ENCODE measurements at regions of chr13 and their contacts with region 1.

Region 1: GRCh38 chr13:72781451-72782439 is at the starts of genes DIS3 and PIBF1:
- DNase-seq: peak; percentile 82 to 97 (median 94)
- ATAC-seq: peak; percentile 99
- H3K4me3 ChIP-seq: peak within 1 kb of the TSS; percentile 94
- H3K4me3 Mint-ChIP-seq: peak within 1 kb of the TSS; percentile 96 to 100 (median 99)
- H3K27ac ChIP-seq: peak within 1 kb of the TSS; percentile 87
- H3K27ac Mint-ChIP-seq: peak within 1 kb of the TSS; percentile 95 to 100 (median 98)
- H3K4me1 ChIP-seq: peaks cover 35 to 37% of the 10 kb centered on the region in 2 donors
- H3K4me1 Mint-ChIP-seq: peaks cover 44 to 84% (median 71%) of the 10 kb centered on the region in 7 donors
- H3K27me3 ChIP-seq: no peaks in the 10 kb centered on the region
- H3K27me3 Mint-ChIP-seq: no peaks in the 10 kb centered on the region
- total RNA-seq, gene DIS3: 24.8 to 44.8 (median 39.2) TPM
- total RNA-seq, gene PIBF1: 27.3 to 40.1 (median 31.6) TPM

Region 2: GRCh38 chr13:71517004-71517403 is 1264.7 kb before region 1 on chr13:
- CTCF ChIA-PET with region 1: no interaction called
- POLR2A ChIA-PET with region 1: no interaction called
- intact Hi-C with region 1: no loop called
- DNase-seq: no peak
- ATAC-seq: no peak
- H3K4me3 ChIP-seq: no peak overlapping the region
- H3K4me3 Mint-ChIP-seq: no peak overlapping the region
- H3K27ac ChIP-seq: no peak overlapping the region
- H3K27ac Mint-ChIP-seq: no peak overlapping the region
- H3K4me1 ChIP-seq: no peaks in the 10 kb centered on the region
- H3K4me1 Mint-ChIP-seq: no peaks in the 10 kb centered on the region
- H3K27me3 ChIP-seq: no peaks in the 10 kb centered on the region
- H3K27me3 Mint-ChIP-seq: no peaks in the 10 kb centered on the region

Region 3: GRCh38 chr13:72737033-72737432 is 44.7 kb before region 1 on chr13:
- CTCF ChIA-PET with region 1: no interaction called
- POLR2A ChIA-PET with region 1: no interaction called
- intact Hi-C with region 1: no loop called
- DNase-seq: no peak
- ATAC-seq: no peak
- H3K4me3 ChIP-seq: no peak overlapping the region
- H3K4me3 Mint-ChIP-seq: no peak overlapping the region
- H3K27ac ChIP-seq: no peak overlapping the region
- H3K27ac Mint-ChIP-seq: no peak overlapping the region
- H3K4me1 ChIP-seq: no peaks in the 10 kb centered on the region
- H3K4me1 Mint-ChIP-seq: peaks cover 0 to 32% (median 6%) of the 10 kb centered on the region in 7 donors
- H3K27me3 ChIP-seq: no peaks in the 10 kb centered on the region
- H3K27me3 Mint-ChIP-seq: no peaks in the 10 kb centered on the region

Region 4: GRCh38 chr13:72757792-72758535 is 23.8 kb before region 1 on chr13:
- CTCF ChIA-PET with region 1: no interaction called
- POLR2A ChIA-PET with region 1: no interaction called
- intact Hi-C with region 1: loop called in 1 of 2 experiments (anchors 2 kb)
- DNase-seq: no peak
- ATAC-seq: no peak
- H3K4me3 ChIP-seq: no peak overlapping the region
- H3K4me3 Mint-ChIP-seq: no peak overlapping the region
- H3K27ac ChIP-seq: no peak overlapping the region
- H3K27ac Mint-ChIP-seq: no peak overlapping the region
- H3K4me1 ChIP-seq: no peaks in the 10 kb centered on the region
- H3K4me1 Mint-ChIP-seq: peaks cover 0 to 10% (median 0%) of the 10 kb centered on the region in 7 donors
- H3K27me3 ChIP-seq: no peaks in the 10 kb centered on the region
- H3K27me3 Mint-ChIP-seq: no peaks in the 10 kb centered on the region

Region 5: GRCh38 chr13:72931311-72931710 is 149.6 kb after region 1 on chr13:
- CTCF ChIA-PET with region 1: no interaction called
- POLR2A ChIA-PET with region 1: no interaction called
- intact Hi-C with region 1: no loop called
- DNase-seq: no peak
- ATAC-seq: no peak
- H3K4me3 ChIP-seq: no peak overlapping the region
- H3K4me3 Mint-ChIP-seq: no peak overlapping the region
- H3K27ac ChIP-seq: no peak overlapping the region
- H3K27ac Mint-ChIP-seq: no peak overlapping the region
- H3K4me1 ChIP-seq: no peaks in the 10 kb centered on the region
- H3K4me1 Mint-ChIP-seq: no peaks in the 10 kb centered on the region
- H3K27me3 ChIP-seq: no peaks in the 10 kb centered on the region
- H3K27me3 Mint-ChIP-seq: no peaks in the 10 kb centered on the region

Region 6: DNA sequence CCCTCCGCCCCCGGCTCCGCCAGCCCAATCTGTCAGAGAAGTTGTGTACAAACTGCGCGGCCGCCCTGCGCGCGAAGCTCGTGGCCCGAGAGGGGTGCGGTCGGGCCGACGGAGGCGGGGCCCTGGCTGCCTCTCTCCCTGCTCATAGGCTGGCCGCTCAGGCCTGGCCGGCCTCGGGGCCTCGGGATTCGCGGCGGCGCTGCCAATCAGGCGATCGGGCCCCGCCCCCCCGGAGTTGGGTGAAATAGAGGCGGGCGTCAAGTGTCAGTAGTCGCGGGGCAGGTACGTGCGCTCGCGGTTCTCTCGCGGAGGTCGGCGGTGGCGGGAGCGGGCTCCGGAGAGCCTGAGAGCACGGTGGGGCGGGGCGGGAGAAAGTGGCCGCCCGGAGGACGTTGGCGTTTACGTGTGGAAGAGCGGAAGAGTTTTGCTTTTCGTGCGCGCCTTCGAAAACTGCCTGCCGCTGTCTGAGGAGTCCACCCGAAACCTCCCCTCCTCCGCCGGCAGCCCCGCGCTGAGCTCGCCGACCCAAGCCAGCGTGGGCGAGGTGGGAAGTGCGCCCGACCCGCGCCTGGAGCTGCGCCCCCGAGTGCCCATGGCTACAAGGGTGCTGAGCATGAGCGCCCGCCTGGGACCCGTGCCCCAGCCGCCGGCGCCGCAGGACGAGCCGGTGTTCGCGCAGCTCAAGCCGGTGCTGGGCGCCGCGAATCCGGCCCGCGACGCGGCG is 277.2 kb after region 1 on chr13 and contains the start of gene KLF5:
- CTCF ChIA-PET with region 1: no interaction called
- POLR2A ChIA-PET with region 1: no interaction called
- intact Hi-C with region 1: loop called (anchors 1 to 2 kb)
- DNase-seq: peak; percentile 93 to 98 (median 94)
- ATAC-seq: peak; percentile 98
- H3K4me3 ChIP-seq: peak within 1 kb of the TSS; percentile 58
- H3K4me3 Mint-ChIP-seq: peak within 1 kb of the TSS; percentile 82 to 94 (median 90)
- H3K27ac ChIP-seq: peak within 1 kb of the TSS; percentile 42
- H3K27ac Mint-ChIP-seq: peak within 1 kb of the TSS; percentile 38 to 92 (median 79)
- H3K4me1 ChIP-seq: peaks cover 4 to 10% of the 10 kb centered on the region in 2 donors
- H3K4me1 Mint-ChIP-seq: peaks cover 6 to 32% (median 23%) of the 10 kb centered on the region in 7 donors
- H3K27me3 ChIP-seq: peaks cover 5 to 10% of the 10 kb centered on the region in 2 donors
- H3K27me3 Mint-ChIP-seq: peaks cover 19 to 58% (median 40%) of the 10 kb centered on the region in 5 donors
- total RNA-seq, gene KLF5: 3.6 to 13.3 (median 5.7) TPM

Region 7: GRCh38 chr13:73625562-73626339 is 844.0 kb after region 1 on chr13:
- CTCF ChIA-PET with region 1: no interaction called
- POLR2A ChIA-PET with region 1: no interaction called
- intact Hi-C with region 1: loop called (anchors 5 to 10 kb)
- DNase-seq: peak in 7 of 9 donors; percentile 31 to 80 (median 66)
- ATAC-seq: peak; percentile 90
- H3K4me3 ChIP-seq: no peak overlapping the region
- H3K4me3 Mint-ChIP-seq: peak overlapping the region; percentile 51 to 79 (median 74)
- H3K27ac ChIP-seq: no peak overlapping the region
- H3K27ac Mint-ChIP-seq: peak overlapping the region; percentile 62 to 91 (median 84)
- H3K4me1 ChIP-seq: peaks cover 13 to 32% of the 10 kb centered on the region in 2 donors
- H3K4me1 Mint-ChIP-seq: peaks cover 14 to 63% (median 54%) of the 10 kb centered on the region in 7 donors
- H3K27me3 ChIP-seq: no peaks in the 10 kb centered on the region
- H3K27me3 Mint-ChIP-seq: no peaks in the 10 kb centered on the region

Region 8: DNA sequence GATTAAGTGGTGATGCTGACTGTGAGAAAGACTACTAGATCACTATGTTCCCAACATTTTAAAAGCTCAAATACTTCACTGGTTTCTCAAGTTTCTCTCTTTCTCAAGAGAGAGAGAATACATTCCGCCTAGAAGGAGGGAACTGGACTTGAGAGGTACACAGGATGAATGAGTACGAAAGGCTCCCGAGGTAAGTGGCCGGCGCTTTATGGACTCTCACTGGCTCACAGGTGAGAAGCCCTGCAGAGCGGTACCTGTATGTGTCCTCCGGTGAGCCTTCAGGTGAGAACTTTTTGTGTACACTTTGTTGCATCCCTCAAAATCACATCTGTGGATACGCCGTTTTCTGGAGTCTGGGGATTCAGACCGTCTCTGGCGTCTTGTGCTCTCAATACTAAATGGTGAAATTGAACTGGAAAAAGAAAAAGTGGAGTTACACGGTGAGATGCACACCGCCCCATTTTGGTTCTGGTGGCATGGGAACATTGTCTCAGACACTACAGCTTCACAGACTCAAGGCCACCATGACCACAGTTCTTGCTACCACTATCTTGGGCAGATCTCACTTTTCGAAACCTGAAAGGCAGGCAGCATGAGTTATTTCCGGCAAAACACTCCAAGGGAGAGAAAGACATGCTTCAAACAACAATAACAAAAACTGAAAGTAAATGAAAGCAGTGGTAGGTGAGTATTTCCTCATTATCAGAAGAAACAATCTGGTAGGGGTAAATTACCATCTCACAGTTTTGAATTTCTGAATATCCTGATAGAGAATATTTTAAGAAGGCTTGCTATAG is 933.6 kb after region 1 on chr13:
- CTCF ChIA-PET with region 1: no interaction called
- POLR2A ChIA-PET with region 1: no interaction called
- intact Hi-C with region 1: loop called in 1 of 2 experiments (anchors 1 kb)
- DNase-seq: peak in 8 of 9 donors; percentile 53 to 85 (median 77)
- ATAC-seq: peak; percentile 90
- H3K4me3 ChIP-seq: peak overlapping the region; percentile 7
- H3K4me3 Mint-ChIP-seq: peak overlapping the region; percentile 72 to 86 (median 78)
- H3K27ac ChIP-seq: peak overlapping the region; percentile 67
- H3K27ac Mint-ChIP-seq: peak overlapping the region; percentile 87 to 99 (median 97)
- H3K4me1 ChIP-seq: peaks cover 34 to 43% of the 10 kb centered on the region in 2 donors
- H3K4me1 Mint-ChIP-seq: peaks cover 25 to 80% (median 58%) of the 10 kb centered on the region in 7 donors
- H3K27me3 ChIP-seq: no peaks in the 10 kb centered on the region
- H3K27me3 Mint-ChIP-seq: no peaks in the 10 kb centered on the region

Region 9: GRCh38 chr13:74070065-74070464 is 1288.3 kb after region 1 on chr13:
- CTCF ChIA-PET with region 1: no interaction called
- POLR2A ChIA-PET with region 1: no interaction called
- intact Hi-C with region 1: loop called in 1 of 2 experiments (anchors 10 kb)
- DNase-seq: peak in 7 of 9 donors; percentile 59 to 82 (median 79)
- ATAC-seq: peak; percentile 85
- H3K4me3 ChIP-seq: peak overlapping the region; percentile 32
- H3K4me3 Mint-ChIP-seq: peak overlapping the region; percentile 58 to 88 (median 74)
- H3K27ac ChIP-seq: no peak overlapping the region
- H3K27ac Mint-ChIP-seq: peak overlapping the region; percentile 56 to 93 (median 83)
- H3K4me1 ChIP-seq: peaks cover 46 to 51% of the 10 kb centered on the region in 2 donors
- H3K4me1 Mint-ChIP-seq: peaks cover 49 to 90% (median 83%) of the 10 kb centered on the region in 7 donors
- H3K27me3 ChIP-seq: no peaks in the 10 kb centered on the region
- H3K27me3 Mint-ChIP-seq: no peaks in the 10 kb centered on the region

Region 10: GRCh38 chr13:74230984-74231501 is 1449.3 kb after region 1 on chr13:
- CTCF ChIA-PET with region 1: no interaction called
- POLR2A ChIA-PET with region 1: no interaction called
- intact Hi-C with region 1: loop called in 1 of 2 experiments (anchors 5 kb)
- DNase-seq: peak in 7 of 9 donors; percentile 37 to 78 (median 69)
- ATAC-seq: peak; percentile 85
- H3K4me3 ChIP-seq: peak overlapping the region; percentile 61
- H3K4me3 Mint-ChIP-seq: peak overlapping the region; percentile 72 to 87 (median 84)
- H3K27ac ChIP-seq: peak overlapping the region; percentile 70
- H3K27ac Mint-ChIP-seq: peak overlapping the region; percentile 86 to 97 (median 90)
- H3K4me1 ChIP-seq: peaks cover 0 to 29% of the 10 kb centered on the region in 2 donors
- H3K4me1 Mint-ChIP-seq: peaks cover 8 to 62% (median 52%) of the 10 kb centered on the region in 7 donors
- H3K27me3 ChIP-seq: no peaks in the 10 kb centered on the region
- H3K27me3 Mint-ChIP-seq: no peaks in the 10 kb centered on the region